PC-3 (cell line): ENCODE measurements at regions of chr5 and their contacts with region 1.

Region 1: DNA sequence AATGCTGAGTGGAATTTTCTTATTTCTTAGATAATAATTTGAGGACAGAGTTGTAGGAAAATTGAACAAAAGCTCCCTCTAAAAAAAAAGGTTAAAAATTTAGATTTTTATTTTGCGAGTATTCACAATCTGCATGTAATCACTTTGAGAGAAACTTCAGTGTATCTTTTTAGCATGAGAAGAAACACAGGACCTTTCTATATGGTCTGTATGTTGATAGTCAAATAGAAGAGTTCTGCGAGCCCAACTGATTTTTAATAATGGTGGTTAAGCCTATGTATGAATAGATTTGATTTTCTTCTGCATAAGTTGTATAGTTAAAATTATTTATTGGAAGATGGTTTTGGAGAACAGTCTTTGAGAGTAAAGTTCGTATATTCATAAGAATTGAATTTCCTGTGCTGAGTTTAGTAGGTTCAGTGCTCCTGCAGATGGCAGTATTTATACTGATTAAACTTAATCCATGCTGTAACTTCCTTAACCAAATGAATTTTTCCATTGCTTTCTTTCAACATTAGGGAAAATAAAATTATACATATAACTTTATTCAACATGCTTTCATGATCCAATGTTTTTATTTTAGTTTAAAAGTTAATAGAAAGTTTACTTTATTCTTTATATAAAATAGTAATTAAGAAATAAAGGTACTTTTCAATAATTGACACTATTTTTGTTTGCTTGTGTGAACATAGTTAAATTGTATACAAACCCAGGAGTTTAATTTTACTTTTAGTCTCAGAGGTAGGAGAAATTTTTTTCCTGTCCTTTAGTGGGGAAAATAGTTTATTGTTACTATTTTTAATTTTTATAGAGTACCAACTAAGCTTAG is 19.6 kb downstream of the TCERG1 start:
- DNase-seq: peak; percentile 42
- ATAC-seq: peak; percentile 84
- H3K4me3 ChIP-seq: no peak overlapping the region
- H3K27ac ChIP-seq: no peak overlapping the region
- H3K4me1 ChIP-seq: no peaks in the 10 kb centered on the region
- H3K27me3 ChIP-seq: no peaks in the 10 kb centered on the region
- CTCF ChIP-seq: peak; percentile 70

Region 2: DNA sequence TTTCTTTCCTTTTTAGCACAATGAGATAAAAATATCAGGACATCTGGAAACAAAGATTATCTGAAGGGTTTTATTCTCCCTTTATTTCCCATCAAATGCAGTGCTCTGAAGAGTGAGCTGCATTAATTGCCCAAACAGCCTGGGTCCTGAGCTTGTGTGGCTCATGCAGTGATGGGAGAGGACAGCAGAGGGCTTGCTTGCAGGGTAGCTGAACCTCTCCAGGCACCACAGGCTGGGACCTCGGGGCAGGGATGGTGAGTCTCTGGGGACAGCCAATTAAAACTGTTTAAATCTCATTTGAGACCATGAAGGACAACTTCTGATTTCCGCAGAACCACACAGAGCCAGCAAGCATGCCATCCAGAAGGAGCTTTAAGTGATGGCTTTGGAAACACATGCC is 432.6 kb before region 1 on chr5:
- CTCF ChIA-PET with region 1: no interaction called
- POLR2A ChIA-PET with region 1: no interaction called
- intact Hi-C with region 1: no loop called
- DNase-seq: no peak
- ATAC-seq: peak; percentile 38; the same call in 1 of the 2 replicates
- H3K4me3 ChIP-seq: no peak overlapping the region
- H3K27ac ChIP-seq: no peak overlapping the region
- H3K4me1 ChIP-seq: no peaks in the 10 kb centered on the region
- H3K27me3 ChIP-seq: no peaks in the 10 kb centered on the region
- CTCF ChIP-seq: no peak

Region 3: GRCh38 chr5:146059460-146060220 is 407.1 kb before region 1 on chr5:
- CTCF ChIA-PET with region 1: no interaction called
- POLR2A ChIA-PET with region 1: no interaction called
- intact Hi-C with region 1: no loop called
- DNase-seq: no peak
- ATAC-seq: no peak
- H3K4me3 ChIP-seq: no peak overlapping the region
- H3K27ac ChIP-seq: no peak overlapping the region
- H3K4me1 ChIP-seq: no peaks in the 10 kb centered on the region
- H3K27me3 ChIP-seq: peaks cover 37% of the 10 kb centered on the region
- CTCF ChIP-seq: no peak

Region 4: DNA sequence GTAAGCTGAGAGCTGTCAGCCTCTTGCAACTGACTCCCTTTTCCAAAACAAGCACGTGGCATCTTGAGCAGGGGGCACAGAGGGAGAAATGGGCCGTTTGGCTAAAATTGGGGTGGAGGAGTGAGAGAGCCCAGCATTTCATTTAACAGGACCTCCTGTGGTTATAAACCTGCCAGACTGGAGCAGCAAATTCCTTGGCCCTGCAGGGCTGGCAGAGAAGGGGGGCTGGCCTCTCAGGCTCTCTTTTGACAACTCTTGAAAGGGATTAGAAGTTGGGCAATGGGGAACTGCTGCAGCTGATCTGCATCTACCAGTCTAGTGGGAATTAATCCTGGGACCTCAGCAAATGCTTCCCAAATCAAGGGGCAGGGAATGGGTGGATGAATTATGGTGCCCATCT is 135.3 kb before region 1 on chr5:
- CTCF ChIA-PET with region 1: no interaction called
- POLR2A ChIA-PET with region 1: no interaction called
- intact Hi-C with region 1: no loop called
- DNase-seq: no peak
- ATAC-seq: no peak
- H3K4me3 ChIP-seq: no peak overlapping the region
- H3K27ac ChIP-seq: no peak overlapping the region
- H3K4me1 ChIP-seq: no peaks in the 10 kb centered on the region
- H3K27me3 ChIP-seq: peaks cover 33% of the 10 kb centered on the region
- CTCF ChIP-seq: no peak

Region 5: GRCh38 chr5:146528236-146528635 is 61.5 kb after region 1 on chr5:
- CTCF ChIA-PET with region 1: interaction called, 4 read pairs
- POLR2A ChIA-PET with region 1: no interaction called
- intact Hi-C with region 1: loop called (anchors 1 kb)
- DNase-seq: peak; percentile 29
- ATAC-seq: peak; percentile 44; the same call in 1 of the 2 replicates
- H3K4me3 ChIP-seq: no peak overlapping the region
- H3K27ac ChIP-seq: no peak overlapping the region
- H3K4me1 ChIP-seq: no peaks in the 10 kb centered on the region
- H3K27me3 ChIP-seq: peaks cover 19% of the 10 kb centered on the region; the same call in 1 of the 2 replicates
- CTCF ChIP-seq: peak; percentile 47

Region 6: DNA sequence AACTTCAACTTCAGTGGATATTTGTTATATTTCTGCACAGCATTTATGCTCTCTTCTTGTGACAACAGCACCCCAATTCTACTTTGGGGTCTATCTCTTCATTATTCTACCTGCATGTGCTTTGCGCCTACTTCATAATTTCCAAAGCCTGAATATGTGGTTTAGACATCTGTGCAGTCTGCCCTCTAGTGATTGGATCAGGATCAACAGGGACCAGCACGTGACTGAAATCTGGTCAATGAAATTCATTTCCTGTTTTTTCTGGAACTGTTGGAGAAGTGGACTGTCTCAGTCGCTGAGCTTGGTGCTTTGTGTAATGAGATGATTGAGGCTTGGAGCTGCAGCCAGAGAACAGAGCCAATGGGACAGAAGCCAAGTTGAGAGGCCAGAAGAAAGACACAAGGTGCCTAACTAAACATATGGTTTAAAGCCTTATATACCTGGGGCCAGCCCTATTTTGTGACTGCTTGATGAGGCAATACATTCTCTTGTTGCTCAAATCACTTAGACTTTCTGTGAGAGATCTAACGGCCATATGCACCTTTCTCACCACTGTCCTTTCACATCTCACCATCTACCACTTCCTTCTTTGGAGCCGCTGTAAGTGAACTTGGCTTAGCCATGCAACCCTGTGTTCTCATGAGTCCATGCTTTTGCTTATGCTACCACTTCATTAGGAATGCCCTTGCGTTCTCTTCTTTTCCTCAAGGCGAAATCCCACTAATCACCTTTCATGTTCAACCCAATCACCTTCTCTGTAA is 480.6 kb after region 1 on chr5:
- CTCF ChIA-PET with region 1: no interaction called
- POLR2A ChIA-PET with region 1: no interaction called
- intact Hi-C with region 1: no loop called
- DNase-seq: peak; percentile 34
- ATAC-seq: no peak
- H3K4me3 ChIP-seq: no peak overlapping the region
- H3K27ac ChIP-seq: no peak overlapping the region
- H3K4me1 ChIP-seq: no peaks in the 10 kb centered on the region
- H3K27me3 ChIP-seq: peaks cover 12% of the 10 kb centered on the region; the same call in 1 of the 2 replicates
- CTCF ChIP-seq: peak; percentile 61